ENCODE measurements at regions of chr9 and their contacts with region 1.

Region 1: GRCh38 chr9:133782157-133783130 is 44.3 kb upstream of the SARDH start:
- H3K4me3 ChIP-seq: no peak overlapping the region
- H3K27ac ChIP-seq: no peak overlapping the region
- H3K4me1 ChIP-seq: no peaks in the 10 kb centered on the region
- CTCF ChIP-seq: peak; percentile 77

Region 2: DNA sequence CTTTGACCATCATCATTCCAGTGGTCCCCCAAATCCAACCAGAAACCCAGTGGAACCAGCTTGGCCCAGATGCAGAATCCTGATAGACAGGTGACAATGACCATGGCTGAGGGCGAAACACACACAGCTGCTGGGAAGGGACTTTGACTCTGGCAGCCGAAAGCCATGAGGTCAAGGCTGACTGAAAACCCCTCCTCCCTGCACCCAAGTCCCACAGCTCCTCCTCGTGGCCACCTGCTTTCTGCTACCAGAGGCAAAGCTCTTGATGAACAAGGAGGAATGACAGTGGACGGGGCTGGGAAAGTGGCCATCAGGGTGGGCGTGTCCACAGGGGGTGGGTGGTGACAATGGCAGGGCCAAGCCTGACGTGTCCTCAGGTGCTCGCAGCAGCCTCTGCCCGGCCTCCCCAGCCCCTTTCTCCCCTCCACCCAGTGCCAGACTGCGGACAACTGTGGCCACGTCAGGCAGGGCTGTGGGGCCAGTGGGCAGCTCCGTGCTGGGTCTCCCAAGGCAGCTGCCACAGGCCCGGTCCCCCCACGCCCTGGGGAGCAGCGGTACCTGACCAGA is 13.5 kb before region 1 on chr9:
- CTCF ChIA-PET with region 1: interaction called, 66 read pairs
- POLR2A ChIA-PET with region 1: interaction called, 3 read pairs
- H3K4me3 ChIP-seq: no peak overlapping the region
- H3K27ac ChIP-seq: no peak overlapping the region
- H3K4me1 ChIP-seq: no peaks in the 10 kb centered on the region
- CTCF ChIP-seq: no peak

Region 3: GRCh38 chr9:133792721-133793470 is 10.5 kb after region 1 on chr9:
- CTCF ChIA-PET with region 1: interaction called, 29 read pairs
- POLR2A ChIA-PET with region 1: interaction called, 4 read pairs
- H3K4me3 ChIP-seq: no peak overlapping the region
- H3K27ac ChIP-seq: no peak overlapping the region
- H3K4me1 ChIP-seq: no peaks in the 10 kb centered on the region
- CTCF ChIP-seq: peak; percentile 60

Region 4: GRCh38 chr9:133889584-133890301 is 107.3 kb after region 1 on chr9:
- CTCF ChIA-PET with region 1: no interaction called
- POLR2A ChIA-PET with region 1: no interaction called
- H3K4me3 ChIP-seq: no peak overlapping the region
- H3K27ac ChIP-seq: no peak overlapping the region
- H3K4me1 ChIP-seq: no peaks in the 10 kb centered on the region
- CTCF ChIP-seq: no peak

Measured in HEK293 (cell line).